PC-9 (cell line): ENCODE measurements at regions of chr2 and their contacts with region 1.

Region 1: GRCh38 chr2:171325886-171326585 is 107.8 kb downstream of the METTL8 start:
- DNase-seq: no peak
- H3K4me3 ChIP-seq: no peak overlapping the region
- H3K27ac ChIP-seq: no peak overlapping the region
- H3K4me1 ChIP-seq: no peaks in the 10 kb centered on the region; the same call in 1 of the 2 replicates
- H3K27me3 ChIP-seq: no peaks in the 10 kb centered on the region
- CTCF ChIP-seq: no peak

Region 2: DNA sequence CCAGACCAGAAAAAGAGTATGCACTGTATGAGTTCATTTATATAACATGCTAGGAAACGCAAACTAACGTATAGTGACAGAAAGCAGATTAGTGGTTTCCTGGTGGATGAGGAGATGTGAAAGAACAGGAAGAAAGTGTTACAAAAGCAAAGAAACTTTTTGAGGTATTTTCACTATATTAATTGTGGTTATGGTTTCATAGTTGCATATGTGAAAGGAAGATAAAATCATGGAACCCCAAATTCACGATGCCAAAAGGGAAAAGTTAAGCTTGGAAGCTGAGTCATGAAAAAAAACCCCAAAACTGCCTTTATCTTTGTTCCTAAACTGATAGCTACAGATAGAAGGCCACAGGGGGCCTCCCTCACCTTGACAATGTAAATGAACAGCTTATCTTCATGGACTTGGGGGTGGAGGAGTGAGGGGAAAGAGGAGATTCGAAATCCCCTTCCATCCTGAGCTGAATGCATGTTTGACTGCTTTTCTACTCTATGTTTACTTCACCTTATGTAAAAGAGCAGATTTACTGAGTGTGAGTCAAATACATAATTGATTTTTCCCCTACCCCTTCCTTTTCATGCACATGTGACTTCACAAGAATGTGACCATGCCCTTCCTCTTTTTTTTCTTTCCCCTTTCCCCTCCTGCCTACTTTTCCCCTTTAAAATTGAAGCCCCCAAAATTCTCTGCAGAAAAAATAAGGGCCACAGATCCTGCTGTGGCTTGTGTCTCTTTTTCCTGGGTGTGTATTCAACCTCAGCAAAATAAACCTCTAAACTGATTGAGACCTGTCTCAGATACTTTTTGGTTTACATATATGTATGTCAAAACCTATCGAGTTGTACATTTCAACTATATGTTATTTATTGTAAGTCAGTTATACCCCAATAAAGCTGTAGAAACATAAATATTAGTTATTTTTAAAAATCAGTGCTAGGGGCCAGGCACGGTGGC is 65.3 kb before region 1 on chr2:
- CTCF ChIA-PET with region 1: interaction called, 10 read pairs
- POLR2A ChIA-PET with region 1: no interaction called
- intact Hi-C with region 1: no loop called
- DNase-seq: peak in 1 of 2 experiments; percentile 51
- H3K4me3 ChIP-seq: no peak overlapping the region
- H3K27ac ChIP-seq: peak overlapping the region; percentile 59
- H3K4me1 ChIP-seq: peaks cover 13% of the 10 kb centered on the region
- H3K27me3 ChIP-seq: no peaks in the 10 kb centered on the region
- CTCF ChIP-seq: no peak

Region 3: DNA sequence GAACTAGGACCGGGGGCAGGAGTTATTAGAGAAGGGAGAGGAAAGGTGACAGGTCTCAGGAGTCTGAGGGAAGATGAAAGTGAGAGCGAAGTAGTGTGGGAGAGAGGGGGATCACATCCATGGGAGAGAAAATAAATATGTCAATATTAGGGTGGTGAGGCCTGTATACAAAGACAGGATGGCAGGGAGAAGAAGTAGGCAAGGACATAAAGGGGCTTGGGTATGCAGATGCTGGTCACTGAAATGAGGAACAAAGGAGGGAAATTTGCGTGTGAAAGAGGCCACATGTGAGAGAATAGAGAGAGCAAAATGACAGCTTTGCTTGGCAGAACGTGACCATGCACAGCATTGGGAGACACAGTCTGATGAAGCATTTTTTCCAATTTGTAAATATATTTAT is 687.4 kb after region 1 on chr2:
- CTCF ChIA-PET with region 1: no interaction called
- POLR2A ChIA-PET with region 1: interaction called, 13 read pairs
- intact Hi-C with region 1: no loop called
- DNase-seq: no peak
- H3K4me3 ChIP-seq: no peak overlapping the region
- H3K27ac ChIP-seq: no peak overlapping the region
- H3K4me1 ChIP-seq: peaks cover 7% of the 10 kb centered on the region
- H3K27me3 ChIP-seq: no peaks in the 10 kb centered on the region
- CTCF ChIP-seq: no peak